HepG2 (cell line): ENCODE measurements at regions of chr12 and their contacts with region 1.

Region 1: GRCh38 chr12:76031537-76032073 is at the start of gene PHLDA1:
- DNase-seq: peak; percentile 91
- ATAC-seq: peak; percentile 88
- H3K4me3 ChIP-seq: peak within 1 kb of the TSS; percentile 97 to 99 (median 98)
- H3K27ac ChIP-seq: peak within 1 kb of the TSS; percentile 95
- H3K4me1 ChIP-seq: peaks cover 54% of the 10 kb centered on the region
- H3K27me3 ChIP-seq: peaks cover 0 to 3% of the 10 kb centered on the region in 2 experiments; a peak in 1 of 5 replicates
- CTCF ChIP-seq: peak; percentile 78
- EP300 ChIP-seq: no peak; a peak in 1 of 4 replicates
- POLR2A ChIP-seq: peak; percentile 95
- RAD21 ChIP-seq: peak; percentile 99
- total RNA-seq, gene PHLDA1: 41.0 and 42.6 TPM in 2 replicates

Region 2: DNA sequence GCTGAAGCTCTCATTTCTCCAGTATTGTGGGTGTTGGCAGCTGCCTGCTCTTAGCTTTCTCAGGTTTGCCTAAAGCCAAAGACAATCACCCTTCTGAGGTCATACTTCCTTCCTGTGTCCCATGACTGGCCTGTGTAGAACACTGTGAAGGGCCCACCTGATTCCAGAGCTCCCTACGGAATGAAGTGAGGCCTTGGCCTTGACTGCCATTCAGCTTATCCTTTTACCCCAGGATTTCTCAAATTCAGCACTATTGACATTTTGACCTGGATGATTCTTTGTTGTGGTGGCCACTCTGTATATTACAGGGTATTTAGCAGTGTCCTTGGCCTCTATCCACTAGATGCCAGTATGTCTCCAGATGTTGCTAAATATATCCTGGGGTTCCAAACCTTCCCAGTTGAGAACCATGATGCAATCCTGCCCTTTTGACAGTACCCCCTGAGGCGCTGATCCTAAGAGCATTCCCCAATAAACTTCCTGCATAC is 407.9 kb before region 1 on chr12:
- CTCF ChIA-PET with region 1: interaction called, 6 read pairs
- POLR2A ChIA-PET with region 1: interaction called, 51 read pairs
- in situ Hi-C with region 1: loop called (anchors 5 kb)
- intact Hi-C with region 1: loop called (anchors 2 kb)
- DNase-seq: peak; percentile 87
- ATAC-seq: peak; percentile 99
- H3K4me3 ChIP-seq: no peak overlapping the region; a peak in 1 of 6 replicates
- H3K27ac ChIP-seq: no peak overlapping the region
- H3K4me1 ChIP-seq: peaks cover 40% of the 10 kb centered on the region
- H3K27me3 ChIP-seq: no peaks in the 10 kb centered on the region
- CTCF ChIP-seq: peak; percentile 82
- EP300 ChIP-seq: peak in 1 of 2 experiments; percentile 91; a peak in 2 of 4 replicates
- POLR2A ChIP-seq: no peak
- RAD21 ChIP-seq: peak; percentile 87

Region 3: DNA sequence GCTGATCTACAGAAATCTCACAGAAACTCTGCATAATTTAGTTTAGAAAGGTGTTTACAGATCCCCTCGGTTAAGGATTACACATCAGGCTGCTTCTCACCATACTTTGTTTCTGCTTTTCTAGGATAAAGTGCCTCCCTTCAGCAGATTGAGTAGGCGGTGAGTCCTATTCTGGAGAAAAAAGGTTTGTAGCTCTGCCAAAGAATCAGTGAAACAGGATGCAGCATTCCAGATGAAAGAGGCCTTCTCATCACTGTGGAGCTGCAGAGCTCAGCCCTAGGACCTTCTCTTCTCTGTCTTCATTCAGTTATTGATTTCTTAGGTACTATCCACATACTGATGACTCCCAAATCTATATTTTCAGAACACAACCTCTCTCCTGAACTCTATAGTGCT is 364.7 kb before region 1 on chr12:
- CTCF ChIA-PET with region 1: no interaction called
- POLR2A ChIA-PET with region 1: interaction called, 70 read pairs
- in situ Hi-C with region 1: no loop called
- intact Hi-C with region 1: loop called (anchors 2 kb)
- DNase-seq: peak; percentile 75
- ATAC-seq: peak; percentile 77
- H3K4me3 ChIP-seq: peak overlapping the region; percentile 15 to 57 (median 50); a peak in 3 of 6 replicates
- H3K27ac ChIP-seq: peak overlapping the region; percentile 99
- H3K4me1 ChIP-seq: peaks cover 44% of the 10 kb centered on the region
- H3K27me3 ChIP-seq: no peaks in the 10 kb centered on the region
- CTCF ChIP-seq: no peak
- EP300 ChIP-seq: 0 out of 4 replicates have a peak, but pooled peaks of 1 of the 2 experiments have one; percentile 10
- POLR2A ChIP-seq: no peak
- RAD21 ChIP-seq: no peak

Region 4: DNA sequence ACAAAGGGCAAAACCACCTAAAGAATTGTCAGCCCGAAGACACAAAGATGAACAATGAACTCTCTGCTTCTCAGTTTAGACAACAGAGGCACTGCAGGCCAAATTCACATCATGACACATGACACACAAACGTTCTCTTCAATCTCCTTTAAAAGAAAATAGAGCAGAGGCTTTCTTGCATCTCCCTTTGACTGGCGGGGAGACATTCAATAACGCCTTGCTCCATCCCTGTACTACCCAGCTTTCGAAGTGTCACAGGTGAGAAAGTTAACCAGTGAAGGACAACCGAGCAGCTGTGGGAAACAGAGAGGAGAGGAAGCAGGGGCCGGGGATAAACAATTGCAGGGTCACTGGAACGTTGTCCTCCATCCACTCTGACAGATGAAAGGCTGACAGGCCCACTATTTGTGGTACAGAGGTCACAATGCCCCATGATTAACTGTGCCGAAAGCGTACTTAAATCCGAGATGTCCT is 130.8 kb before region 1 on chr12:
- CTCF ChIA-PET with region 1: no interaction called
- POLR2A ChIA-PET with region 1: interaction called, 3 read pairs
- in situ Hi-C with region 1: no loop called
- intact Hi-C with region 1: loop called (anchors 5 kb)
- DNase-seq: peak; percentile 94
- ATAC-seq: peak; percentile 100
- H3K4me3 ChIP-seq: peak overlapping the region in 2 of 3 experiments; percentile 1 to 37; a peak in 2 of 6 replicates
- H3K27ac ChIP-seq: peak overlapping the region; percentile 69
- H3K4me1 ChIP-seq: peaks cover 39% of the 10 kb centered on the region
- H3K27me3 ChIP-seq: no peaks in the 10 kb centered on the region
- CTCF ChIP-seq: no peak
- EP300 ChIP-seq: peak; percentile 10 to 90; a peak in 2 of 4 replicates
- POLR2A ChIP-seq: no peak
- RAD21 ChIP-seq: peak; percentile 29; the same call in 1 of the 2 replicates

Region 5: GRCh38 chr12:75954041-75954440 is 77.6 kb before region 1 on chr12:
- CTCF ChIA-PET with region 1: no interaction called
- POLR2A ChIA-PET with region 1: interaction called, 16 read pairs
- in situ Hi-C with region 1: no loop called
- intact Hi-C with region 1: no loop called
- DNase-seq: peak; percentile 82
- ATAC-seq: peak; percentile 91
- H3K4me3 ChIP-seq: no peak overlapping the region
- H3K27ac ChIP-seq: peak overlapping the region; percentile 45
- H3K4me1 ChIP-seq: peaks cover 66% of the 10 kb centered on the region
- H3K27me3 ChIP-seq: no peaks in the 10 kb centered on the region
- CTCF ChIP-seq: no peak
- EP300 ChIP-seq: peak; percentile 44 to 66; a peak in 2 of 4 replicates
- POLR2A ChIP-seq: no peak
- RAD21 ChIP-seq: no peak

Region 6: DNA sequence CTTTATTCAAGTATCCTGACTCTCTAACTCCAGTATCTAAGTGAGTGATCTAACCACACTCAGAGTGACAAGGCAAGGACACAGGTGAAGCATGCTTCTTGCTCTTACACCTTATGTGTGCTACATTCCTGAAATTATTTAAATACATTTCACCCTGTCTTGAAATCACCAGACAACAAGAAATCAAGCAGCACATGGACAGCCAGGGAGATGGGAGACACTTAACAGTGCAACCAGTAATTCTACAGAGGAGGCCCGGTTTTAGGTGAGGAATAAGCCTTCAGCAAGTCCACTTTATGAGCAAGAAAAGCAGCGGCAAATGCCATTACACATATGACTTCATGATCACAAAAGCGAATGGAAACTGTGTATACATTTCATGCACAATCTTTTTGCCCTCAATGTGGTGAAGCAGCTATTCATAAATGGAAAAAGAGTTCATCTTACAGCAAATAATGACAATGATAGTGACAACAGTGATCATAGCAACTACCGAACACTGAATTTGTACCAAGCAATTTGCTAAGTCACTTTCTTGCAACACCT is 37.3 kb before region 1 on chr12:
- CTCF ChIA-PET with region 1: no interaction called
- POLR2A ChIA-PET with region 1: interaction called, 88 read pairs
- in situ Hi-C with region 1: no loop called
- intact Hi-C with region 1: loop called (anchors 2 kb)
- DNase-seq: no peak
- ATAC-seq: no peak
- H3K4me3 ChIP-seq: no peak overlapping the region
- H3K27ac ChIP-seq: no peak overlapping the region
- H3K4me1 ChIP-seq: peaks cover 44% of the 10 kb centered on the region
- H3K27me3 ChIP-seq: no peaks in the 10 kb centered on the region
- CTCF ChIP-seq: no peak
- EP300 ChIP-seq: no peak
- POLR2A ChIP-seq: no peak
- RAD21 ChIP-seq: no peak